Right cardiac atrium (tissue), 5 donors: ENCODE measurements at regions of chr2 and their contacts with region 1.

Region 1: GRCh38 chr2:240983361-240983995 is 14.9 kb upstream of the SNED1 start:
- DNase-seq: peak; percentile 21 to 67 (median 63)
- ATAC-seq: peak; percentile 54 to 63
- H3K4me3 ChIP-seq: no peak overlapping the region
- H3K27ac ChIP-seq: no peak overlapping the region
- H3K4me1 ChIP-seq: peaks cover 4% of the 10 kb centered on the region
- H3K27me3 ChIP-seq: no peaks in the 10 kb centered on the region

Region 2: GRCh38 chr2:240851078-240851991 is 132.1 kb before region 1 on chr2:
- intact Hi-C with region 1: loop called in 1 of 4 experiments (anchors 10 kb)
- DNase-seq: peak; percentile 83 to 95 (median 91)
- ATAC-seq: peak; percentile 90 to 92
- H3K4me3 ChIP-seq: no peak overlapping the region
- H3K27ac ChIP-seq: no peak overlapping the region
- H3K4me1 ChIP-seq: no peaks in the 10 kb centered on the region
- H3K27me3 ChIP-seq: no peaks in the 10 kb centered on the region